A673 (cell line): ENCODE measurements at regions of chr3 and their contacts with region 1.

Region 1: DNA sequence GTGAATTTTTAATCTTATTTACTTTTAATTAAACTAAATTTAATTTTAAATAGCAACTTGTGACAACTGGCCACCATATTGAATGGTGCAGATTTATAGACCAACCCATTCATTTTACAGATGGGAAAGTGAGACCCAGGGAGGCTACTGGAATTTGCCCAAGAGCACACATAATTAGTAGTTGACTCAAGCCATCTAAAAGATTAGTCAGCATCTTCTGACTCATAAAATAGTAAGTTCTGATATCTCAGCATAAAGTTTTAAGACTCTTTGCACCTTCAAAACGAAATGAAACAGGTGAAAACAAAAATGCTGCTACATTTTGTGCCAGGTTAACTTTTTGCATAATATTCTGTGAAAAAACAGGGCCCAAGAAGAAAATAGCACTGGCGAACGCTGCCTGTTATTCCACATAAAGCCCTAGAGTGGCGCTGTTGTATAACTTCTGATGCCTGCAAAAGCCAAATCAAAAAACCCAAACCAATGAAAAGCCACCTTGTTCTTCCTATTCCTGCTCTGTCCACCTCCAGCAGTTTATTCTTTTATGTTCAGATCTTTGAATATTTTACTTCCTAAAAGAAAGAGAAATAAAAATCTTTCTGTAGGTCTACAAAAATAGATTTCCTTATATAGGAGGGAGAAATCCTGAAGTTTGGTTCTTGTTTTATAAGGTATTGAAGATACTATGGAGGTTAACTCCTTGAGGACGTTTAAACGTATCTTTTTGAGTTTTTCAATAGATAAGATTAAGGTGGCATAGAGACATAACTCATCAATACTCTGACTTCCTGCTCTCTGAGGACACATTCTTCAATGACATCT is 62.8 kb downstream of the OTOL1 start:
- DNase-seq: peak; percentile 75
- H3K4me3 ChIP-seq: peak overlapping the region; percentile 26
- H3K27ac ChIP-seq: no peak overlapping the region
- H3K4me1 ChIP-seq: peaks cover 17% of the 10 kb centered on the region
- H3K27me3 ChIP-seq: no peaks in the 10 kb centered on the region
- CTCF ChIP-seq: peak; percentile 91

Region 2: GRCh38 chr3:161700998-161701397 is 141.6 kb after region 1 on chr3:
- CTCF ChIA-PET with region 1: no interaction called
- POLR2A ChIA-PET with region 1: no interaction called
- intact Hi-C with region 1: loop called (anchors 2 kb)
- DNase-seq: peak; percentile 37
- H3K4me3 ChIP-seq: no peak overlapping the region
- H3K27ac ChIP-seq: no peak overlapping the region
- H3K4me1 ChIP-seq: no peaks in the 10 kb centered on the region
- H3K27me3 ChIP-seq: no peaks in the 10 kb centered on the region
- CTCF ChIP-seq: peak; percentile 38

Region 3: GRCh38 chr3:162082516-162082915 is 523.1 kb after region 1 on chr3:
- CTCF ChIA-PET with region 1: no interaction called
- POLR2A ChIA-PET with region 1: no interaction called
- intact Hi-C with region 1: loop called (anchors 10 kb)
- DNase-seq: no peak
- H3K4me3 ChIP-seq: no peak overlapping the region
- H3K27ac ChIP-seq: no peak overlapping the region
- H3K4me1 ChIP-seq: peaks cover 3% of the 10 kb centered on the region
- H3K27me3 ChIP-seq: no peaks in the 10 kb centered on the region
- CTCF ChIP-seq: no peak

Region 4: DNA sequence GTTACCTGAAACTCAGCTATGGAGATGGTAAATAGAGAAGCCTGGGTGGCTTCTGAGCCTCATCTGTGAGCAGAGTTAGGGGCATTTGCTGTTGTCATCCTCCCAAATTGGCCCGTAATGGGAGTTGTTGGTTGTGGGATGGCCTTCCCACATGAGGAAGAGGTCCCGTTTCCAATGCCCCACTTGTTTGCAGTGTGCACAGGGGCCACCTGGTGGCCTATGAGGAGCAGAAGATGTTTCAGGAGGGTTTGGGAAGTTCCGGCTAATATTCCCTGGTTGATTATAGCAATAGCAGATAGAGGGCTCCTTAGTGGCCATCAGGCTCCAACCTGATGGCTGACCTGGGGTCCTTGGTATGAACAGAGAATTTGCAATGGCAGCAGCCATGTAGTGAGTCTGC is 1483.7 kb after region 1 on chr3:
- CTCF ChIA-PET with region 1: no interaction called
- POLR2A ChIA-PET with region 1: no interaction called
- intact Hi-C with region 1: loop called (anchors 10 kb)
- DNase-seq: peak; percentile 37
- H3K4me3 ChIP-seq: no peak overlapping the region
- H3K27ac ChIP-seq: no peak overlapping the region
- H3K4me1 ChIP-seq: no peaks in the 10 kb centered on the region
- H3K27me3 ChIP-seq: no peaks in the 10 kb centered on the region
- CTCF ChIP-seq: peak; percentile 46; the same call in 1 of the 2 replicates

Region 5: DNA sequence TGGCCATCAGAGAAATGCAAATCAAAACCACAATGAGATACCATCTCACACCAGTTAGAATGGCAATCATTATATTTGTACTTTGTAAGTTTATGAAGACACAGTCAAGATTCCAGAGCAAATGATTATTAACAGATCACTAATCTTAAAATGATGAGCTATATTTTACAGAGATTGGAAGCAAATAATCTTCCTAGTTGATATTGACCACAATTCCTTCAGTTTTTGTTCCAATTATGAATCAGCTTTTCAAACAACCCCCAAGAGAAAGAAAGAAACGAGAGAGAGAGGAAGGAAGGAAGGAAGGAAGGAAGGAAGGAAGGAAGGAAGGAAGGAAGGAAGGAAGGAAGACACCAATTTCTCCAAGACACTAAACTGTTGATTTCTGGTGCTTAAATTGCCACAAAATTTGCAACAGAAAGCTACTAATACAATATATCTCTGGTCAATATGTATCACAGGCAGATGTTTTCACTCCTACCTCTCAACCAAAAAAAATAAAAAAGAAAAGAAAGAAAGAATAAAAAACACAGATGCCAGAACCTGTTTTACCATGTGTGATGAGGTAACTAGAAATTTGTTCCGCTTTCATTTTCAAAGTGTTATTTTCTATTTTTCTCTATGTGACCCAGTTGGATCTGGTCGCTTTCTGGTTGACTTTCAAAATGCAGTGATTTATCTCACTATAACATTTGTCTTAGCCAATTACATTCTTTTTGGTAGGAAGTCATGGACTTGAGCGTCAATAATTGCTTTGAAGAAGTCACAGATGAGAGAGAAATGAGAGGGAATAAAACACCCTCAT is 1909.3 kb after region 1 on chr3:
- CTCF ChIA-PET with region 1: no interaction called
- POLR2A ChIA-PET with region 1: no interaction called
- intact Hi-C with region 1: loop called (anchors 2 kb)
- DNase-seq: peak; percentile 88
- H3K4me3 ChIP-seq: no peak overlapping the region
- H3K27ac ChIP-seq: peak overlapping the region; percentile 98
- H3K4me1 ChIP-seq: peaks cover 14% of the 10 kb centered on the region
- H3K27me3 ChIP-seq: no peaks in the 10 kb centered on the region
- CTCF ChIP-seq: no peak